ENCODE measurements at regions of chr3 and their contacts with region 1.

Region 1: GRCh38 chr3:49171119-49171774 is at the start of gene KLHDC8B:
- DNase-seq: peak; percentile 82
- ATAC-seq: peak; percentile 82
- H3K4me3 ChIP-seq: peak within 1 kb of the TSS; percentile 80 to 89 (median 80)
- H3K27ac ChIP-seq: peak within 1 kb of the TSS; percentile 60
- H3K4me1 ChIP-seq: peaks cover 60% of the 10 kb centered on the region
- H3K27me3 ChIP-seq: no peaks in the 10 kb centered on the region; a peak in 1 of 5 replicates
- CTCF ChIP-seq: peak; percentile 93
- EP300 ChIP-seq: no peak
- POLR2A ChIP-seq: no peak
- RAD21 ChIP-seq: peak; percentile 90
- total RNA-seq, gene KLHDC8B: 17.2 and 17.7 TPM in 2 replicates

Region 2: DNA sequence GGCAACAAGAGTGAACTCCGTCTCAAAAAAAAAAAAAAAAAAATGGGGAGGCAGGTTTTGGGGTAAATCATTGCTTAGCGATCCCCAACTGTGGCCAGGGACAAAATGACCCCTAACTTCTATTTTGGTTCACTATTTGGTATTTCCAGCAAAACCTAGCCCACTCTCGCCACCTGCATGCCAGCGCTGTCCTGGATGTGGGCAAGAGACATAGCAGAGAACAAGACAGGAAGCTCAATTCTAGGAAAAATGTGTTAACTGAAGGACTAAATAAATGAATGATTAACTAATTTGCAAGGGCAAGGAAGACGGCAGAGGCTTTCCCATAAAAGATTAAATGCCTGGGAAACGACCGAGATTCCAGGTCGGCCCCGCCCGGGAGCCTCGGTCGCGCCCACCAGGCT is 257.5 kb after region 1 on chr3:
- CTCF ChIA-PET with region 1: no interaction called
- POLR2A ChIA-PET with region 1: interaction called, 7 read pairs
- in situ Hi-C with region 1: loop called (anchors 25 kb)
- intact Hi-C with region 1: no loop called
- DNase-seq: no peak
- ATAC-seq: peak; percentile 24
- H3K4me3 ChIP-seq: peak overlapping the region; percentile 72 to 89 (median 87)
- H3K27ac ChIP-seq: peak overlapping the region; percentile 90
- H3K4me1 ChIP-seq: peaks cover 43% of the 10 kb centered on the region
- H3K27me3 ChIP-seq: no peaks in the 10 kb centered on the region; a peak in 2 of 5 replicates
- CTCF ChIP-seq: peak; percentile 10
- EP300 ChIP-seq: no peak
- POLR2A ChIP-seq: no peak
- RAD21 ChIP-seq: no peak

Measured in HepG2 (cell line).